ENCODE measurements at regions of chrX and their contacts with region 1.

Region 1: DNA sequence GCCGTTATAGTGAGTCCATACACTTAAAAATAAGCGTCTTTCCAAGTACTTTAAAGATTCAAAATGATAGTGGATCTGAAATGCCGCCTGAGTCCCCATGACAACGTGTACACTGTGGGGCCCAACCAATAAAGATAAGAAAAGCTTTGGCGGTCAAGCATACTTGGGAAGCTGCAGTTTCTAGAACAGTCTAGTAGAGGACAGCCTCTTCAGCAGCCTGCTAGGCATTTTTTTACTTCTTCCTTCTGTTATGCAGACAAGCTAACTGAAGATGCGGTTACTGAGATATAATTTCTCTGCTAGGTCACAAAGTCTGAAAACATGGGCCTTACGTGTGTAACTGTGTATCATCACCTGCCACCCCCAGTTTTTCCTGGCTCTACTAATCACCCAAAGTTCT is 402 bp upstream of the UPRT start:
- DNase-seq: no peak
- ATAC-seq: peak; percentile 7
- H3K4me3 ChIP-seq: peak overlapping the region in 4 of 5 experiments; percentile 68 to 96 (median 90)
- H3K4me3 Mint-ChIP-seq: peak overlapping the region; percentile 93
- H3K27ac ChIP-seq: peak overlapping the region; percentile 89 to 90
- H3K27ac Mint-ChIP-seq: peak overlapping the region; percentile 94
- H3K4me1 ChIP-seq: peaks cover 14 to 15% of the 10 kb centered on the region in 2 donors
- H3K4me1 Mint-ChIP-seq: peaks cover 46% of the 10 kb centered on the region
- H3K27me3 ChIP-seq: no peaks in the 10 kb centered on the region
- H3K27me3 Mint-ChIP-seq: no peaks in the 10 kb centered on the region
- CTCF ChIP-seq: no peak

Region 2: GRCh38 chrX:74291964-74292807 is 981.3 kb before region 1 on chrX:
- CTCF ChIA-PET with region 1: no interaction called
- POLR2A ChIA-PET with region 1: no interaction called
- intact Hi-C with region 1: no loop called
- DNase-seq: peak; percentile 92
- ATAC-seq: peak; percentile 88
- H3K4me3 ChIP-seq: peak overlapping the region; percentile 78 to 87 (median 80)
- H3K4me3 Mint-ChIP-seq: peak overlapping the region; percentile 99
- H3K27ac ChIP-seq: peak overlapping the region; percentile 77 to 81
- H3K27ac Mint-ChIP-seq: peak overlapping the region; percentile 98
- H3K4me1 ChIP-seq: peaks cover 3 to 6% of the 10 kb centered on the region in 2 donors
- H3K4me1 Mint-ChIP-seq: peaks cover 18% of the 10 kb centered on the region
- H3K27me3 ChIP-seq: no peaks in the 10 kb centered on the region
- H3K27me3 Mint-ChIP-seq: no peaks in the 10 kb centered on the region
- CTCF ChIP-seq: no peak

Region 3: DNA sequence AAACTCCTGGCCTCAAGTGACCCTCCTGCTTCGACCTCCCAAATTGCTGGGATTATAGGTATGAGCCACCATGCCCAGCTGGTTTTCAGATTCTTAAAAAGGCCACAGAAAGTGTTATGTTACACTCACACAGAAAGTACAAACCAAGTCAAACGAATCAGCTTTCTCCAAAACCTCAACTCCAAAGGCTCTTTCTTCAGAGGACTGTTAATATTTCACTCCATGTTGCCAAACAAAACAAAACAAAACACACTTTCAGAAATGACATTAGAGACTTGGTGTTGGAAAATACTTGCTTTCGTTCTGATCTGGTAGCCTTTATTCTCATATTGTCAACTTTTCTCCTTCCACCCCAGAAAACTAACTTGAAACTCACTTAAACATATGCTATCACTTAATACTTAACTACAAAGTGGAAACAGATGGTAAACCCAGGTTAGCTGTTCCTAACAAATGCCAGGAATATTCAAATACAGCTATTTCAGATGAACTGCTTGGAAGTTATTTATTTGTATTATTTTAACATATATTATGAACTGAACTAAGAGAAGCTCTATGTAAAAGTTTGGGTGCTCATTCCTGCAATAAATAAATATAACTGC is 693.8 kb before region 1 on chrX:
- CTCF ChIA-PET with region 1: no interaction called
- POLR2A ChIA-PET with region 1: no interaction called
- intact Hi-C with region 1: no loop called
- DNase-seq: no peak
- ATAC-seq: no peak
- H3K4me3 ChIP-seq: no peak overlapping the region
- H3K4me3 Mint-ChIP-seq: no peak overlapping the region
- H3K27ac ChIP-seq: no peak overlapping the region
- H3K27ac Mint-ChIP-seq: no peak overlapping the region
- H3K4me1 ChIP-seq: no peaks in the 10 kb centered on the region
- H3K4me1 Mint-ChIP-seq: no peaks in the 10 kb centered on the region
- H3K27me3 ChIP-seq: no peaks in the 10 kb centered on the region
- H3K27me3 Mint-ChIP-seq: no peaks in the 10 kb centered on the region
- CTCF ChIP-seq: no peak

Region 4: DNA sequence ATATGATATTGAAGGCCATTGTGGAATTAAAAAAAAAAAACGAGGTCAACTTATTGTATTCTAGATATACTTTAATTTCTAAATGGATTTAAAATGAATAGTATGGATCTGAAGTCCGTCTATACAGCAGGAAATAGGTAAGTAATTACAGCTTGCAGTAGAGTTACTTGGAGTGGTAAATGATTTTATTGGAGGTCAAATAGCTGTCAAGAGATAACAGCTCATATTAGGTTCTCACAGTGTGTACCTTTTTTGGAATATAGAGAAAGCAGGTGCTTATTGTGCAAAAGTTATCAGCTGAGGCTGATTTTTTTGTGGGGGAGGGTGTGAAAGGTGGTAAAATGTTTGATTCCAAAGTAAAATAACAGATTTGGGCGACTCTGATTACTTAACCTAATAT is 18.1 kb after region 1 on chrX:
- CTCF ChIA-PET with region 1: no interaction called
- POLR2A ChIA-PET with region 1: no interaction called
- intact Hi-C with region 1: no loop called
- DNase-seq: no peak
- ATAC-seq: no peak
- H3K4me3 ChIP-seq: no peak overlapping the region
- H3K4me3 Mint-ChIP-seq: no peak overlapping the region
- H3K27ac ChIP-seq: no peak overlapping the region
- H3K27ac Mint-ChIP-seq: no peak overlapping the region
- H3K4me1 ChIP-seq: no peaks in the 10 kb centered on the region
- H3K4me1 Mint-ChIP-seq: no peaks in the 10 kb centered on the region
- H3K27me3 ChIP-seq: no peaks in the 10 kb centered on the region
- H3K27me3 Mint-ChIP-seq: no peaks in the 10 kb centered on the region
- CTCF ChIP-seq: no peak

Region 5: DNA sequence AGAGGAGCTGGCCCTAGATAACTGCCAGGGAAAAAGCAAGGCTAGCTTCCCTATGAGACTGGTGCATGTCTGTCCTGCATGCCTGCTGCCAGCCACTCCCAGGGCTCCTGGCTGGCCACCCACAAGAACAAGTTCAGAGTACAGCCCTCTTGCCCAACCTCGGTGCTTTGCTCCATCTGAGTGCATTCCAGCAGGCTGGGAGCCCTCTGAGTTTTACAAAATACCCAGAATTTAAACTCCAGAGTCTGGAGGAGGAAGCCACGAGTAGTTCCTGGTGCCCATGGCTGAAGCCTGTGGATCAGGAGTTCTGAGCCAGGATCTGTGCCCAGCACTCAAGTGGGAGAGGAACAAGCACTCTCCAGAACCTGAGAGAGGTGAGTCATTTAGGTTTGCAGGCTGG is 400.0 kb after region 1 on chrX:
- CTCF ChIA-PET with region 1: no interaction called
- POLR2A ChIA-PET with region 1: no interaction called
- intact Hi-C with region 1: no loop called
- DNase-seq: no peak
- ATAC-seq: no peak
- H3K4me3 ChIP-seq: no peak overlapping the region
- H3K4me3 Mint-ChIP-seq: no peak overlapping the region
- H3K27ac ChIP-seq: no peak overlapping the region
- H3K27ac Mint-ChIP-seq: no peak overlapping the region
- H3K4me1 ChIP-seq: no peaks in the 10 kb centered on the region
- H3K4me1 Mint-ChIP-seq: no peaks in the 10 kb centered on the region
- H3K27me3 ChIP-seq: no peaks in the 10 kb centered on the region
- H3K27me3 Mint-ChIP-seq: no peaks in the 10 kb centered on the region
- CTCF ChIP-seq: no peak

Region 6: DNA sequence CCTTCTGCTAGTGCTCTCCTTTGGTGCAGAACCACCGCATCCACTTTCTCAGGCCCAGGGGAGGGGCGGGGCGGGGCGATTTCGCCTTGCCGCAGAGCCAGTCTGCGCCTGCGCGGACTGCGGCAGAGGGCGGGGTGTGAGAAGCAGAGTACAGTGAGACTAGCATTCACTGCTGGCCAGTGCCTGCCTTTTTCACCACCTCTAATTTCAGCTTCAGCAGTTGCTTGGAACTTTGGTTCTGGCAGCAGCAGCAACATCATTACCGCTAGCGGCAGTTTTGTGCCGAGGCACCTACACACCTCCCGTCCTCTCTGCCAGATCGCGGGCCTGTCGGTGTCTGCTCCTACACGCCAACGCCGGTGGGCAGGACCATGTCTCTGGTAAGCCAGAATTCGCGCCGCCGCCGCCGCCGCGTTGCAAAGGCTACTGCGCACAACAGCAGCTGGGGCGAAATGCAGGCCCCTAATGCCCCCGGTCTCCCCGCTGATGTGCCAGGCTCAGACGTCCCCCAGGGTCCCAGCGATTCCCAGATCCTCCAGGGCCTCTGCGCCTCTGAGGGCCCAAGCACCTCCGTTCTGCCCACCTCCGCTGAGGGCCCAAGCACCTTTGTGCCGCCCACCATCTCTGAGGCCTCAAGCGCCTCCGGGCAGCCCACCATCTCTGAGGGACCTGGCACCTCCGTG is 1154.2 kb after region 1 on chrX and contains the start of gene MAGEE1:
- CTCF ChIA-PET with region 1: no interaction called
- POLR2A ChIA-PET with region 1: no interaction called
- intact Hi-C with region 1: loop called (anchors 5 kb)
- DNase-seq: peak; percentile 90
- ATAC-seq: peak; percentile 89
- H3K4me3 ChIP-seq: peak within 1 kb of the TSS; percentile 1 to 74 (median 73)
- H3K4me3 Mint-ChIP-seq: peak within 1 kb of the TSS; percentile 92
- H3K27ac ChIP-seq: peak within 1 kb of the TSS; percentile 49 to 60
- H3K27ac Mint-ChIP-seq: peak within 1 kb of the TSS; percentile 90
- H3K4me1 ChIP-seq: peaks cover 6 to 17% of the 10 kb centered on the region in 2 donors
- H3K4me1 Mint-ChIP-seq: peaks cover 20% of the 10 kb centered on the region
- H3K27me3 ChIP-seq: no peaks in the 10 kb centered on the region
- H3K27me3 Mint-ChIP-seq: peaks cover 2% of the 10 kb centered on the region
- CTCF ChIP-seq: no peak
- total RNA-seq, gene MAGEE1: 6.7 and 7.0 TPM in 2 replicates

Measured in B cell (primary cell).